ENCODE measurements at regions of chr1 and their contacts with region 1.

Region 1: DNA sequence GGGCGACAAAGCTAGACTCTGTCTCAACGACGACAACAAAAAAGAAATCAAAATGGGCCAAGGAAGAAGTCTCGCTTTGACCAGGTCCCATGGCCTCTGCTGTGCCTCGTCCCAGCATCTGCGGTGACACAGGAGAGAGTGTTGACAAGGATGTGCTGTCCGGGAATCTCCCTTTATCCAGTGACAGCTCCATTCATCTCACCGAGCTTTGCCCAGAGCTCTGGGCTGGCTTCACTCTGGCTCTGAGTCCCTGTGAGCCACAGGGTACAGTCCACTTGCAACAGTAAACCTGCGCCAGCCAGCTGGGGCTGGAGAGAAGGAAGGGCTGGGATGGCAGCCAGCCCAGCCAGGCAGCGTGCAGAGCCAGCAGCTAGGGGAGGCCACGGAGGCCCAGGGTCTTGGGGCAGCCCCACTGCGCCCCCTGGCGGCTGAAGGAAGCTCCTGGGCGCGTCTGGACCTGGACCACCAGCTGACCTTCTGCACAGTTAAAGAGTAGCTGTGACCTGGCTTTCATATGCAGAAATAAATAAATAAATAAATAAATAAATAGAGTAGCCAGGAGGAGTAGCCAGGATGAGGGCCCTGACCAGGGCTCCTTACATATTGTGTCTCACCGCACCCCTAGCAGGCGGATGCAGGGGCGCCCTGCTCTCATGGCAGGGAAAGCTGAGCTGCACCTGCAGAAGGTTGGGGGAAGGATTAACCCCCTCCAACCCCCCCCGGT is 29.7 kb downstream of the ENO1 start:
- DNase-seq: peak; percentile 37 to 81 (median 69)
- ATAC-seq: peak; percentile 93
- H3K4me3 ChIP-seq: no peak overlapping the region
- H3K4me3 Mint-ChIP-seq: no peak overlapping the region
- H3K27ac ChIP-seq: no peak overlapping the region
- H3K27ac Mint-ChIP-seq: no peak overlapping the region
- H3K4me1 ChIP-seq: peaks cover 0 to 3% of the 10 kb centered on the region in 2 donors
- H3K4me1 Mint-ChIP-seq: peaks cover 0 to 14% (median 5%) of the 10 kb centered on the region in 7 donors
- H3K27me3 ChIP-seq: no peaks in the 10 kb centered on the region
- H3K27me3 Mint-ChIP-seq: peaks cover 0 to 2% (median 0%) of the 10 kb centered on the region in 5 donors

Region 2: GRCh38 chr1:8463144-8463927 is 385.5 kb before region 1 on chr1:
- CTCF ChIA-PET with region 1: no interaction called
- POLR2A ChIA-PET with region 1: no interaction called
- intact Hi-C with region 1: loop called in 1 of 2 experiments (anchors 1 kb)
- DNase-seq: peak in 7 of 9 donors; percentile 41 to 68 (median 61)
- ATAC-seq: peak; percentile 75
- H3K4me3 ChIP-seq: no peak overlapping the region
- H3K4me3 Mint-ChIP-seq: peak overlapping the region in 9 of 10 donors; percentile 35 to 80 (median 52)
- H3K27ac ChIP-seq: peak overlapping the region; percentile 43
- H3K27ac Mint-ChIP-seq: peak overlapping the region; percentile 54 to 90 (median 85)
- H3K4me1 ChIP-seq: peaks cover 0 to 31% of the 10 kb centered on the region in 2 donors
- H3K4me1 Mint-ChIP-seq: peaks cover 20 to 82% (median 63%) of the 10 kb centered on the region in 7 donors
- H3K27me3 ChIP-seq: no peaks in the 10 kb centered on the region
- H3K27me3 Mint-ChIP-seq: no peaks in the 10 kb centered on the region

Region 3: DNA sequence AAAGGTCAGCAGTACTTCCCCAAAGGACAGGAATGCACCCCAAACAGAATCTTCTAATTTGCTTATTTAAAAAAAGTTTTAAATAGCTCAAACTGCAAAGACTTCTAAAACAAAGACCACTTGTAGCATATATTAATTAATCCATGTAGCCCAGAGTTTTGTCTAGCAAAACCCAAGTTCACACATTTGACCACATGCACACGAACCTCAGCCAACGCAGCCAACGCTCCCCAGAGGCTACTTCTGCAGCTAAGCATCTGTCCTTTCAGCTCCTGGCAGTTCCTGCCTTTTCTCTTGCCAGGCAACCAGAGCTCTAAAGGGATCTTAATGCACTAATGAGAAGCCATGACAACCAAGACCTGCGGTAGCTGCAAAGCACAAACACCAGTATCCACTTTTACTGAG is 121.0 kb before region 1 on chr1:
- CTCF ChIA-PET with region 1: interaction called, 9 read pairs
- POLR2A ChIA-PET with region 1: no interaction called
- intact Hi-C with region 1: loop called (anchors 2 to 5 kb)
- DNase-seq: no peak
- ATAC-seq: no peak
- H3K4me3 ChIP-seq: no peak overlapping the region
- H3K4me3 Mint-ChIP-seq: no peak overlapping the region
- H3K27ac ChIP-seq: no peak overlapping the region
- H3K27ac Mint-ChIP-seq: no peak overlapping the region
- H3K4me1 ChIP-seq: no peaks in the 10 kb centered on the region
- H3K4me1 Mint-ChIP-seq: peaks cover 5 to 24% (median 9%) of the 10 kb centered on the region in 7 donors
- H3K27me3 ChIP-seq: no peaks in the 10 kb centered on the region
- H3K27me3 Mint-ChIP-seq: no peaks in the 10 kb centered on the region

Region 4: GRCh38 chr1:8789314-8790214 is 59.3 kb before region 1 on chr1:
- CTCF ChIA-PET with region 1: no interaction called
- POLR2A ChIA-PET with region 1: no interaction called
- intact Hi-C with region 1: loop called in 1 of 2 experiments (anchors 5 kb)
- DNase-seq: no peak
- ATAC-seq: peak; percentile 48
- H3K4me3 ChIP-seq: no peak overlapping the region
- H3K4me3 Mint-ChIP-seq: no peak overlapping the region
- H3K27ac ChIP-seq: no peak overlapping the region
- H3K27ac Mint-ChIP-seq: no peak overlapping the region
- H3K4me1 ChIP-seq: no peaks in the 10 kb centered on the region
- H3K4me1 Mint-ChIP-seq: peaks cover 0 to 12% (median 7%) of the 10 kb centered on the region in 7 donors
- H3K27me3 ChIP-seq: no peaks in the 10 kb centered on the region
- H3K27me3 Mint-ChIP-seq: no peaks in the 10 kb centered on the region

Region 5: DNA sequence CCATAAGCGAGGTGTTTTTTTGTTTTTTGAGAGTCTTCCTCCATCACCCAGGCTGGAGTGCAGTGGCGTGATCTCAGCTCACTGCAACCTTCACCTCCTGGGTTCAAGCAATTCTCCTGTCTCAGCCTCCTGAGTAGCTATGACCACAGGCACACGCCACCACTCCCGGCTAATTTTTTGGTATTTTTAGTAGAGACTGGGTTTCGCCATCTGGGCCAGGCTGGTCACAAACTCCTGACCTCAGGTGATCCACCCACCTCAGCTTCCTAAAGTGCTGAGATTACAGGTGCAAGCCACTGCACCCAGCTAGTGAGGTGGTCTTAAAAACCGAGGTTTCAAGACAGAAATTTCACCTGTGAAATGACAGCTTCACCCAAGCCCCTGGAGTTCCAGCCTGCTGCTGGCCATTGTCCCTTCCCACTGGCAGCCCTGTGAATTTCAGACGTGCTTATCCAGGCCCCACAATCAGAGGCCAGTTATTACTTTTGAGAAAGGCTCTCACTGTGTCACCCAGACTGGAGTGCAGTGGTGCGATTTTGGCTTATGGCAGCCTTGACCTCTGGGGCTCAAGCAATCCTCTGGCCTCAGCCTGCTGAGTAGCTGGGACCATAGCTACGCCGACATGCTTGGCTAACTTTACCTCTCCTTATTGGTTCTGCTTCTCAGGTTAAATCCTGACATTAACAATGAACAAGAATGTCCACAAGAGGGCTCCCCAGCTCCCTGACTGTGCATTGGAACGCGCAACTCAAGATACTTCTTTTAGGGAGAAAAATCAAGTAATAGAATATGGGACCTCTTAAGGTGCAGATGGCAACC is 10.3 kb after region 1 on chr1:
- CTCF ChIA-PET with region 1: interaction called, 27 read pairs
- POLR2A ChIA-PET with region 1: no interaction called
- intact Hi-C with region 1: no loop called
- DNase-seq: peak in 7 of 9 donors; percentile 52 to 73 (median 61)
- ATAC-seq: peak; percentile 83
- H3K4me3 ChIP-seq: no peak overlapping the region
- H3K4me3 Mint-ChIP-seq: peak overlapping the region in 1 of 10 donors; percentile 61
- H3K27ac ChIP-seq: no peak overlapping the region
- H3K27ac Mint-ChIP-seq: peak overlapping the region; percentile 45 to 89 (median 78)
- H3K4me1 ChIP-seq: no peaks in the 10 kb centered on the region
- H3K4me1 Mint-ChIP-seq: peaks cover 0 to 48% (median 10%) of the 10 kb centered on the region in 7 donors
- H3K27me3 ChIP-seq: no peaks in the 10 kb centered on the region
- H3K27me3 Mint-ChIP-seq: no peaks in the 10 kb centered on the region

Region 6: GRCh38 chr1:8980656-8981055 is 131.8 kb after region 1 on chr1:
- CTCF ChIA-PET with region 1: no interaction called
- POLR2A ChIA-PET with region 1: no interaction called
- intact Hi-C with region 1: no loop called
- DNase-seq: no peak
- ATAC-seq: no peak
- H3K4me3 ChIP-seq: no peak overlapping the region
- H3K4me3 Mint-ChIP-seq: no peak overlapping the region
- H3K27ac ChIP-seq: no peak overlapping the region
- H3K27ac Mint-ChIP-seq: peak overlapping the region in 2 of 9 donors; percentile 8 to 23
- H3K4me1 ChIP-seq: no peaks in the 10 kb centered on the region
- H3K4me1 Mint-ChIP-seq: peaks cover 0 to 26% (median 19%) of the 10 kb centered on the region in 7 donors
- H3K27me3 ChIP-seq: no peaks in the 10 kb centered on the region
- H3K27me3 Mint-ChIP-seq: peaks cover 0 to 4% (median 0%) of the 10 kb centered on the region in 5 donors